Activated CD4-positive, alpha-beta T cell treated with anti-CD3 and anti-CD28 coated beads for 36 hours (primary cell): ENCODE measurements at regions of chr10 and their contacts with region 1.

Region 1: DNA sequence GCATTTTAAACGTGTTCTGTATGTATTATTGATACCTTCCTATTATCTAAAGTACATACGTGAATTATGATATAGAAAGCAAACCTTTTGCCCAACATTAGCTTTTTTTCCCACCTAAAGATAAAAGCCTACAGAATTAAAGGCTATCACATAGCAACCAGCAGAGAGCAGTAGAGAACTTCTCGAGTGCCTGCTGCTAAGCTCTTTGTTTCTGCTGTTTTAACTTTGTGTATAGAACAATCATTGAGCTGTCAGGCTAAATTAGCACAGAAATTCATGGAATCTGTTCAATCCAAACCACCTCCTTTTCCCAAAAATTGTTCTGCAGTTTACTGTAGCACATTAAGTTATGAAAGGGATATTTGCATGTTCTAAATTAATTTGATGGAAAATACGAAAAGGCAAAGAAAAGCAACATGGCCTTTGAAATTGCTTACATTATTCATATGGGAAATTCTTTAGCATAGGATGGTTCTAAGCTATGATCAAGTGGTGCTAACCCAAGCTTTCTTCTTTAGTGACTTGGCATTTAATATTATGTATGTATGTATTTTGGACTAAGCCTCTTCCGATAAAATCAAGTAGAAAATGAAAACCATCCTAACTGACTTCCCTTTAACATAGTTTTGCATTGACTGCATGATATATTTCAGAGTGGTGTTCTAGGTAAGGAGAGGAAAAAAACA is 1288.5 kb downstream of the GATA3 start:
- DNase-seq: no peak
- ATAC-seq: peak; percentile 26
- H3K4me3 Mint-ChIP-seq: no peak overlapping the region
- H3K27ac Mint-ChIP-seq: no peak overlapping the region
- H3K4me1 Mint-ChIP-seq: peaks cover 12% of the 10 kb centered on the region
- H3K27me3 Mint-ChIP-seq: no peaks in the 10 kb centered on the region

Region 2: GRCh38 chr10:9331583-9332008 is 11.4 kb before region 1 on chr10:
- CTCF ChIA-PET with region 1: interaction called, 21 read pairs
- POLR2A ChIA-PET with region 1: no interaction called
- intact Hi-C with region 1: no loop called
- DNase-seq: no peak
- ATAC-seq: no peak
- H3K4me3 Mint-ChIP-seq: no peak overlapping the region
- H3K27ac Mint-ChIP-seq: no peak overlapping the region
- H3K4me1 Mint-ChIP-seq: no peaks in the 10 kb centered on the region
- H3K27me3 Mint-ChIP-seq: peaks cover 29% of the 10 kb centered on the region

Region 3: DNA sequence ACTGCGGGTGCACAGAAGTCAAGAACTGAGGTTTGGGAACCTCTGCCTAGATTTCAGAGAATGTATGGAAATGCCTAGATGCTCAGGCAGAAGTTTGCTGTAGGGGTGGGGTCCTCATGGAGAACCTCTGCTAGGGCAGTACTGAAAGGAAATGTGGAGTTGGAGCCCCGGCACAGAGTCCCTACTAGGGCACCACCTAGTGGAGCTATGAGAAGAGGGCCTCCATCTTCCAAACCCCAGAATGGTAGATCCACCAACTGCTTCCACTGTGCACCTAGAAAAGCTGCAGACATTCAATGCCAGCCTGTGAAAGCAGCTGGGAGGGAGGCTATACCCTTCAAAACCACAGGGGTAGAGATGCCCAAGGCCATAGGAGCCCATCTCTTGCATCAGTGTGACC is 338.6 kb after region 1 on chr10:
- CTCF ChIA-PET with region 1: interaction called, 3 read pairs
- POLR2A ChIA-PET with region 1: no interaction called
- intact Hi-C with region 1: loop called in 1 of 2 experiments (anchors 5 kb)
- DNase-seq: peak; percentile 7
- ATAC-seq: no peak
- H3K4me3 Mint-ChIP-seq: no peak overlapping the region
- H3K27ac Mint-ChIP-seq: no peak overlapping the region
- H3K4me1 Mint-ChIP-seq: no peaks in the 10 kb centered on the region
- H3K27me3 Mint-ChIP-seq: no peaks in the 10 kb centered on the region

Region 4: GRCh38 chr10:10294881-10295529 is 952.0 kb after region 1 on chr10:
- CTCF ChIA-PET with region 1: no interaction called
- POLR2A ChIA-PET with region 1: no interaction called
- intact Hi-C with region 1: no loop called
- DNase-seq: no peak
- ATAC-seq: no peak
- H3K4me3 Mint-ChIP-seq: no peak overlapping the region
- H3K27ac Mint-ChIP-seq: no peak overlapping the region
- H3K4me1 Mint-ChIP-seq: no peaks in the 10 kb centered on the region
- H3K27me3 Mint-ChIP-seq: peaks cover 2% of the 10 kb centered on the region

Region 5: DNA sequence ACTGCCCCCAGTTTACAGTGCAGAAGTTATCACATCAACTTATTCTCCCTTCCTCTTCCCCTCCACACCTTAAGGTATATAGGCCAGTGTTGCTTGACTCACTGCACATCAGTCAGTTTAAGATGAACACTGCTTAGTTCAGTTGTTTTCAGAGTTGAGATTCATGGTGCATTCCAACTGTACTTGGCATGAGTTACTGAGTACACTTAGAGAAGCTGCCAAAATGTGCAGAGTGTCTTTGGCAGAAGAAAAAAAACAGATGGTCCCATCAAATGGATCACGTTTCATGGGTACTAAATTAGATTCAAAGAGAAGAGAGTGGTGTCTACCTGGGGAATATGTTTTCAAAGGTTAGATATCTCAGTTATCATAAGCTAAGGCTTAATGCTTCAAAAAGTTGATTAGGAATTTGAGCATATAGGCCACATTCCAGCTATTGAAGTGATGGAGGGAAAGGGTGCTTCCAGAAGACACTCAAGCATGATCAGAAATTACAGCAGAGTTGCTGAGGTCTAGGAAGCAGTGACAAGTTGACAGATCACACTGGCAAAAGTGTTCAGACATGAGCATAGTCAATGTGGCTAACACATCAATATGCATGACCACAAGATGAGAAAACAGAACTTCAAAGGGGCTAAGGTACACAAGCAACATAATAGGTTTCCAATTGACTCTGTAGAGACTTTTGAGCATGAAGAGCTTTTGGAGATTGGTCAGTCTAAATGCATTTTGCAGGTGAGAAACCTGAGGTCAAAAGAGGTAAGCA is 1095.5 kb after region 1 on chr10:
- CTCF ChIA-PET with region 1: no interaction called
- POLR2A ChIA-PET with region 1: no interaction called
- intact Hi-C with region 1: no loop called
- DNase-seq: no peak
- ATAC-seq: no peak
- H3K4me3 Mint-ChIP-seq: no peak overlapping the region
- H3K27ac Mint-ChIP-seq: no peak overlapping the region
- H3K4me1 Mint-ChIP-seq: no peaks in the 10 kb centered on the region
- H3K27me3 Mint-ChIP-seq: peaks cover 19% of the 10 kb centered on the region